HepG2 (cell line): ENCODE measurements at regions of chr2 and their contacts with region 1.

Region 1: GRCh38 chr2:173354601-173355131 is at the start of gene CDCA7:
- DNase-seq: peak; percentile 64
- ATAC-seq: peak; percentile 92
- H3K4me3 ChIP-seq: peak within 1 kb of the TSS; percentile 75 to 90 (median 89)
- H3K27ac ChIP-seq: peak within 1 kb of the TSS; percentile 86
- H3K4me1 ChIP-seq: peaks cover 37% of the 10 kb centered on the region
- H3K27me3 ChIP-seq: no peaks in the 10 kb centered on the region; a peak in 2 of 5 replicates
- CTCF ChIP-seq: peak; percentile 38; the same call in 1 of the 2 replicates
- EP300 ChIP-seq: peak in 1 of 2 experiments; percentile 100; a peak in 1 of 4 replicates
- POLR2A ChIP-seq: peak; percentile 64 to 84; a peak in 3 of 4 replicates
- RAD21 ChIP-seq: 0 out of 2 replicates have a peak, but pooled peaks have one; percentile 29
- total RNA-seq, gene CDCA7: 46.2 and 52.5 TPM in 2 replicates

Region 2: GRCh38 chr2:173075781-173076580 is 278.7 kb before region 1 on chr2 and contains the start of gene MAP3K20:
- CTCF ChIA-PET with region 1: no interaction called
- POLR2A ChIA-PET with region 1: no interaction called
- in situ Hi-C with region 1: no loop called
- intact Hi-C with region 1: loop called (anchors 10 kb)
- DNase-seq: peak; percentile 38
- ATAC-seq: peak; percentile 91
- H3K4me3 ChIP-seq: peak within 1 kb of the TSS; percentile 70 to 91 (median 80)
- H3K27ac ChIP-seq: peak within 1 kb of the TSS; percentile 45
- H3K4me1 ChIP-seq: peaks cover 23% of the 10 kb centered on the region
- H3K27me3 ChIP-seq: peaks cover 0 to 21% of the 10 kb centered on the region in 2 experiments; a peak in 3 of 5 replicates
- CTCF ChIP-seq: peak; percentile 74
- EP300 ChIP-seq: no peak
- POLR2A ChIP-seq: peak; percentile 30 to 62; a peak in 3 of 4 replicates
- RAD21 ChIP-seq: peak; percentile 48; the same call in 1 of the 2 replicates
- total RNA-seq, gene MAP3K20: 13.5 and 19.8 TPM in 2 replicates

Region 3: GRCh38 chr2:173221937-173222594 is 132.6 kb before region 1 on chr2:
- CTCF ChIA-PET with region 1: no interaction called
- POLR2A ChIA-PET with region 1: no interaction called
- in situ Hi-C with region 1: no loop called
- intact Hi-C with region 1: loop called (anchors 10 kb)
- DNase-seq: no peak
- ATAC-seq: no peak
- H3K4me3 ChIP-seq: no peak overlapping the region
- H3K27ac ChIP-seq: no peak overlapping the region
- H3K4me1 ChIP-seq: peaks cover 20% of the 10 kb centered on the region
- H3K27me3 ChIP-seq: no peaks in the 10 kb centered on the region
- CTCF ChIP-seq: no peak
- EP300 ChIP-seq: no peak
- POLR2A ChIP-seq: no peak
- RAD21 ChIP-seq: no peak

Region 4: DNA sequence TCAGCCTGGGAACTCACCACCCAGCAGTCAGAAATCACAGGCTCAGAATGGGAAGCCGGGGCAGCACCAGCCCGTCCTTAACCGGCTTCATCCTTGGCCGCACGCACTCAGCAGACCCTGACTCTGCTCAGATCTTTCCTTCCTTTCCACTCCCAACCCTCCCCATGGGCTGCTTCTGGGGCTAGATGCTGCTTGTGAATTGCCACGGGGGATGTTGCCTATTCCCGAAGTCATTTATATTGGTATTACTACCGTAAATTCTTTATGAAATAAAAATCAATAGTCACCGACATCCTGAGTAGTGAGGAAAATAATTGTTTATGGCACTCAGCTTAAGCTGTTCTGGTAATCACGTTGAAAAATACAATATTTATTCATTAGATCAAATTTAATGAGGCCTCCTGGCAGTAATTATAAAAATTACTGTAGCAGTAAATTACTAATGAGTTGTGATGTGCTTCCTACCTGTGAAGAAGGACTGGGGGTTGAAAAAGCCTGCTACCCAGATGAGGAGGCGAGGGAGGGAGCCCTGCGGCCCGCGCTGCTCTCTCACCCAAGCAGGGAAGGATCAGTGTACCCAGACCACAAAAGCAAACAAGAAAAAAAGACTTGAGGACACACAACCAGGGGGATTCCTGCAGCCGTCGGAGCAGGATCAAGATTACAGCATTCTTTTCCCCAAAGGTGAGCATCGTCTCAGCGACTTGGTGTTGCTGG is 31.5 kb after region 1 on chr2:
- CTCF ChIA-PET with region 1: no interaction called
- POLR2A ChIA-PET with region 1: no interaction called
- in situ Hi-C with region 1: no loop called
- intact Hi-C with region 1: loop called (anchors 1 kb)
- DNase-seq: no peak
- ATAC-seq: no peak
- H3K4me3 ChIP-seq: no peak overlapping the region
- H3K27ac ChIP-seq: no peak overlapping the region
- H3K4me1 ChIP-seq: no peaks in the 10 kb centered on the region
- H3K27me3 ChIP-seq: no peaks in the 10 kb centered on the region
- CTCF ChIP-seq: no peak
- EP300 ChIP-seq: no peak
- POLR2A ChIP-seq: no peak
- RAD21 ChIP-seq: no peak